ENCODE measurements at regions of chr17 and their contacts with region 1.

Region 1: DNA sequence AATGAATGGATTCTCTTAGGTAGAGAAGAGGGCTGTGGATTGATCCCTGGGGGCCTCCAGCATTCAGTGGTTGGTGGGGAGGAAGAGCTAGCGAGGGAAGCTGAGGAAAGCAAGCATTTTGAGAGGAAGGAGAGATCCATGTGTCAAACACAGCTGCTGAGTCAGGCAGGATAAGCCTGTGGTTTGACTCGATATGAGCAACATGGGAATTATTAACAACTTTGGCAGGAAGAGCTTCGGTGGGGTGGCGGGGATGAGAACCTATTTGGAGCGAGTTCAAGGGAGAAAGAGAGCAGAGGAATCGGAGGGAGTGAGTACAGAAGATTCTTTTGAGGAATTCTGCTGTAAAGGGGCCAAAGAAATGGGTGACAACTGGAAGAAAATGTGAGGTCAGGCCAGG is 59.5 kb upstream of the CDC42EP4 start:
- DNase-seq: no peak
- ATAC-seq: no peak
- H3K4me3 Mint-ChIP-seq: no peak overlapping the region
- H3K27ac Mint-ChIP-seq: no peak overlapping the region
- H3K4me1 Mint-ChIP-seq: no peaks in the 10 kb centered on the region
- H3K27me3 Mint-ChIP-seq: no peaks in the 10 kb centered on the region
- CTCF ChIP-seq: no peak

Region 2: DNA sequence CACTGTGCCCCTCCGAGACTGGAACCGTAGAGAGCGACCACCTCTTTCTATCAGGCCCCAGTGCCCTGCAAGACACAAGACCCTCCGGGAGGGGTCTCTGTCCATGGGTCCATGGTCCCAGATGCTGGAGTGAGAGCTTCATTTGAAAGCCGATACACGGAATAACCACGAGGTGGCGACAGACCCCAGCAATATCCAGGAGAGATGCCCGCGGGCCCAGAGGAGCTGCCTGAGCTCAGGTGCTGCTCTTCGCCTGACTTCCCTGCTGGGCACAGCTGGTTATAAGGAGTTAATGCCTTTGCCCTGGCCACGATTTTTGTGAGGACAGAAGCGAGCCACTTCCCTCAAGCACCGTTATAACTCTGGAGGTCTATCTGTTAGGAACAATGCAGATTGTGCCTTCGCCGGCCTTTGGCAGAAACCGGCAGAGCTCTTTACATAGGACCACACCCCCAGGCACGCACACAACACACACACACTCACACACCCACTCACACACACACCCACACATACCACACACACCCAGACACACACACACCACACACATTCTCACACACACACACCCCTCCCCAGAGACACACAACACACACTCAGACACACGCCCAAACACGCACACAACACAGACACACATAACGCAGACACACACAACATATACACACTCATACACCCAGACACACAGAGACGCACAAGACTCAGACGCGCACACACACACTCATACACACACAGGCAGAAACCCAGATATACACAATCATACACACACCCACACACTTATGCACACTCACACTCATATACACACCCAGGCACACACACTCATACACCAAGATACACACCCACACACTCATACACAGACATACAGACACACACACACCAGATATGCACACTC is 814.1 kb before region 1 on chr17:
- CTCF ChIA-PET with region 1: interaction called, 19 read pairs
- POLR2A ChIA-PET with region 1: no interaction called
- intact Hi-C with region 1: no loop called
- DNase-seq: peak; percentile 78
- ATAC-seq: peak; percentile 73
- H3K4me3 Mint-ChIP-seq: no peak overlapping the region
- H3K27ac Mint-ChIP-seq: no peak overlapping the region
- H3K4me1 Mint-ChIP-seq: no peaks in the 10 kb centered on the region
- H3K27me3 Mint-ChIP-seq: peaks cover 2% of the 10 kb centered on the region
- CTCF ChIP-seq: peak; percentile 72

Region 3: GRCh38 chr17:73231841-73232586 is 139.3 kb before region 1 on chr17:
- CTCF ChIA-PET with region 1: interaction called, 11 read pairs
- POLR2A ChIA-PET with region 1: no interaction called
- intact Hi-C with region 1: no loop called
- DNase-seq: peak; percentile 98
- ATAC-seq: peak; percentile 95
- H3K4me3 Mint-ChIP-seq: peak overlapping the region; percentile 93
- H3K27ac Mint-ChIP-seq: peak overlapping the region; percentile 97
- H3K4me1 Mint-ChIP-seq: peaks cover 58% of the 10 kb centered on the region
- H3K27me3 Mint-ChIP-seq: no peaks in the 10 kb centered on the region
- CTCF ChIP-seq: no peak

Region 4: DNA sequence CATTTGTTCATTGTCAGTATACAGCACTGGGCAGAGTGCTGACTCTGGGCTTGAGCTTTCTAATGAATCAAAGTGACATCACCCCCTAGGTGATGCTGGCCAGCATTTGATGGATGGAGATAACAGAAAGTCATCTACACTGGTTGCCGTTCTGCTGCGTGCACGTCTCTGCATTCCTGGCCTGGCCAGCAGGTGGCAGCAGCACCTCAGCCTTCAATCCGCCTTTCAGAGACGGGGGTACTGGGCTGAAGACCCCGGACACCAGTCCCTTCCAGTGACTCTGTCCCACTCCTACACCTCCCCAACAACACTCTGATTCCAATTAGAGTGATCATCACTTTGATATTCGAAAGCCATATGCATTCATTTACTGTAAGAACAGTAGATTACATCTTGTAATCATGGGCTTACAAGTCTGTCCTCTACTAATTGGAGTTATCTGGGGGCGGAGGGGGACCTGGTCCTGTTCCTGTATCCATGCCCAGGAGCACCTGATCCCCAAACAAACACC is 115.6 kb before region 1 on chr17:
- CTCF ChIA-PET with region 1: interaction called, 157 read pairs
- POLR2A ChIA-PET with region 1: interaction called, 3 read pairs
- intact Hi-C with region 1: loop called (anchors 1 kb)
- DNase-seq: peak; percentile 73
- ATAC-seq: peak; percentile 87
- H3K4me3 Mint-ChIP-seq: no peak overlapping the region
- H3K27ac Mint-ChIP-seq: no peak overlapping the region
- H3K4me1 Mint-ChIP-seq: peaks cover 4% of the 10 kb centered on the region
- H3K27me3 Mint-ChIP-seq: no peaks in the 10 kb centered on the region
- CTCF ChIP-seq: peak; percentile 99

Region 5: DNA sequence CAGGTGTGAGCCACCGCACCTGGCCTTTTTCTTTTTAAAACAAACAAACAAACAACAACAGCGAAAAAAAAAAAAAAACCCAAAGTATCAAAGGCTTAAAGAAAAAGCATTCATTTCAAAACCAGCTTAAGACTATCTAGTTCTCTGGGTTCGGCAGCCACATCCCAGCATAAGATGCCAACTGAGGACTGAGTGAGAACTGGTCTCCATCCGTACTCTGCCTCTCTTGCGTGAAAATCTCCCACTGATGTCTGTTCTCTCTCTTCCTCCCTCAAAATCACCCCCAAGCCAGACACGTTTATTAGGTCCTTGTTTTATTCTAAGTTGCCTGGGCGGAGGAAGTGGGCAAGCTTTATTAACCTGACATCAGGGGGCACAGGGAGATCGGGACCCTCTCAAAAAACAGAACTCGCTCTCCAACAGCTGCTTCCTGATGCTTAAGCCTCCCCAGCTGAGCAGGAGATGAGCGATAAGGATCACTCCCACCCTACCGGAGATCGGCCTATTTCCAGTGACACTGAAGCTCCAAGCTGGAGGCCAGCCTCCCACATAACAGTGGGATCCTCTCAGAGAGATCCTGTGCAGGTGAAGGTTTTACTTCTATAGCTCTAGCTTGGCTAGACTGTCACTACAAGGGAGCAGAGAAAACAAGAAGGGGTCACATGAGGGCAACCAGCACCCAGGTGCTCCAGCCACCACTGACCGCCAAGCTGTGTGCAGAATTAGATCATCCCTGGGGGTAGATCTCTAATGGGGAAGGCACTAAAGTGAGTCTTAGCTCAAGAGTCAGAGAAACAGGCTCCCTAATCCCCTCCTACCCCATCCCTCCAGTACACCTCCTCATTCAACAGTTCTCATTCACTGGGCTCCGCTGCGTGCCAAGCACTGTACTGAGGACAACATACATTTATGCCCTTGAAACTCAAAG is 73.1 kb before region 1 on chr17:
- CTCF ChIA-PET with region 1: interaction called, 11 read pairs
- POLR2A ChIA-PET with region 1: no interaction called
- intact Hi-C with region 1: no loop called
- DNase-seq: no peak
- ATAC-seq: no peak
- H3K4me3 Mint-ChIP-seq: no peak overlapping the region
- H3K27ac Mint-ChIP-seq: no peak overlapping the region
- H3K4me1 Mint-ChIP-seq: no peaks in the 10 kb centered on the region
- H3K27me3 Mint-ChIP-seq: peaks cover 2% of the 10 kb centered on the region
- CTCF ChIP-seq: no peak

Region 6: GRCh38 chr17:73387746-73388577 is 16.7 kb after region 1 on chr17:
- CTCF ChIA-PET with region 1: interaction called, 20 read pairs
- POLR2A ChIA-PET with region 1: interaction called, 3 read pairs
- intact Hi-C with region 1: no loop called
- DNase-seq: no peak
- ATAC-seq: no peak
- H3K4me3 Mint-ChIP-seq: no peak overlapping the region
- H3K27ac Mint-ChIP-seq: no peak overlapping the region
- H3K4me1 Mint-ChIP-seq: no peaks in the 10 kb centered on the region
- H3K27me3 Mint-ChIP-seq: no peaks in the 10 kb centered on the region
- CTCF ChIP-seq: no peak

Region 7: GRCh38 chr17:73455050-73455687 is 83.9 kb after region 1 on chr17:
- CTCF ChIA-PET with region 1: no interaction called
- POLR2A ChIA-PET with region 1: no interaction called
- intact Hi-C with region 1: no loop called
- DNase-seq: no peak
- ATAC-seq: no peak
- H3K4me3 Mint-ChIP-seq: no peak overlapping the region
- H3K27ac Mint-ChIP-seq: no peak overlapping the region
- H3K4me1 Mint-ChIP-seq: no peaks in the 10 kb centered on the region
- H3K27me3 Mint-ChIP-seq: no peaks in the 10 kb centered on the region
- CTCF ChIP-seq: no peak

Measured in activated CD8-positive, alpha-beta T cell treated with anti-CD3 and anti-CD28 coated beads for 36 hours (primary cell).